ENCODE measurements at regions of chr15 and their contacts with region 1.

Region 1: GRCh38 chr15:40454904-40455391 is 14.2 kb downstream of the BAHD1 start:
- DNase-seq: peak; percentile 49
- ATAC-seq: peak; percentile 34
- H3K4me3 Mint-ChIP-seq: no peak overlapping the region
- H3K27ac Mint-ChIP-seq: peak overlapping the region; percentile 81
- H3K4me1 Mint-ChIP-seq: peaks cover 70% of the 10 kb centered on the region
- H3K27me3 Mint-ChIP-seq: no peaks in the 10 kb centered on the region
- CTCF ChIP-seq: no peak

Region 2: DNA sequence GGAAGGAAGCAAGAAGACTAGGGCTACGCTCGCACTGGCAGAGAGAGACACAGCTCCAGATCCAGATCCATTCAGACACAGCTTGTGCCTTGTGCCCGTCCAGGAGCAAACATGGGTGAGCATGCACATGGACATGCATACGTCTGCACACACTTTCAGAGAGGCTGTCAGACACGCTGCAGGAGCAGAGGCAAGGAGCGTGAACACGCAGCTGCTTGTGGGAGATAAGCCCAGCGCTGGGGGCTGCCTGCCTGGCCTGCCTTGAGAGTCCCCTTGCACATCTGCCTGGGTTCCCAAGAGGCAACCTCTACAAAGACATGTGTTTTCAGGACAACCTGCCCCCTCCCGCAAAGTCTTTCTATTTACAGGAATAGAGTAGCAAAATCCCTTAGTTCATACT is 27.8 kb before region 1 on chr15:
- CTCF ChIA-PET with region 1: no interaction called
- POLR2A ChIA-PET with region 1: no interaction called
- intact Hi-C with region 1: no loop called
- DNase-seq: no peak
- ATAC-seq: no peak
- H3K4me3 Mint-ChIP-seq: no peak overlapping the region
- H3K27ac Mint-ChIP-seq: no peak overlapping the region
- H3K4me1 Mint-ChIP-seq: no peaks in the 10 kb centered on the region
- H3K27me3 Mint-ChIP-seq: no peaks in the 10 kb centered on the region
- CTCF ChIP-seq: no peak

Region 3: DNA sequence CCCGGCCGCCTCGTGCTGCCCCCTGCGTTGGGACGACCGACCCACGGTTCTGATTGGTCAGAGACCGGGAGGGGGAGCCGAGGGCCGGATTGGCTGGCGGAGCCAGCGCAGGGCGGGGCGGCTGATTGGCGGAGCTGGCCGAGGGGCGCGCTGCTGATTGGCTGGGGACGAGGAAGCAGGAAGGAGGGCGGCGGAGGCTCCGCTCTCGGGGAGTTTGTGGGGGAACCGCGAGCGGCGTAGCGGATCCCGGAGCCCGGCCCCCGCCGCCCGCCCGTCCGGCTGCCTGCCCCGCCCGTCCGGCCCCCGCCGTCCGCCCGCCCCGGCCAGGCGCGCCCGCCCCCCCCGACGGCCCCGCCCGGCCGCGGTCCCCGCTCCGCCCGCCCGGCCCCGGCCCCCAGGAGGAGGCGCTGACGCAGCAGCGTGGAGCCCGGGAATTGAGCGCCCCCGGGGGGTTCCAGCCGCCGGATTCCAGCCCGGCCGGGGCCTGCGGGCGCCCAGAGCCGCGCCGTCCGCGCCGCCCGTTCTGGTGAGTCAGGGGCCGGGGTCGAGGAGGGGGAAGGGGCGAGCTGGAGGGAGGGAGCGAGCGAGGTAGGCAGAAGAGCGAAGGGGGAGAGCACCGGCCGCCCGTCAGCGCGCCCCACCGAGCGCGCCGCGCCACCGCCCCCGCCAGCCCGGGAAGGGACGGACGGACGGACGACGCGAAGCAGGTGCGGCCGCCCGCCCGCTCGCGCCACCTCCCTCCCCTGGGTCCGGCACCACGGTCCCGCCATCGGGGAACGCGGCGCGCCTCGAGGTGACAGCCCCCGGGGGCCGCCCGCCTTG is 14.0 kb before region 1 on chr15 and contains the start of gene BAHD1:
- CTCF ChIA-PET with region 1: interaction called, 23 read pairs
- POLR2A ChIA-PET with region 1: interaction called, 55 read pairs
- intact Hi-C with region 1: no loop called
- DNase-seq: peak; percentile 97
- ATAC-seq: peak; percentile 92
- H3K4me3 Mint-ChIP-seq: peak within 1 kb of the TSS; percentile 86
- H3K27ac Mint-ChIP-seq: peak within 1 kb of the TSS; percentile 77
- H3K4me1 Mint-ChIP-seq: peaks cover 51% of the 10 kb centered on the region
- H3K27me3 Mint-ChIP-seq: peaks cover 30% of the 10 kb centered on the region
- CTCF ChIP-seq: no peak
- total RNA-seq, gene BAHD1: 14.7 to 17.6 TPM

Region 4: DNA sequence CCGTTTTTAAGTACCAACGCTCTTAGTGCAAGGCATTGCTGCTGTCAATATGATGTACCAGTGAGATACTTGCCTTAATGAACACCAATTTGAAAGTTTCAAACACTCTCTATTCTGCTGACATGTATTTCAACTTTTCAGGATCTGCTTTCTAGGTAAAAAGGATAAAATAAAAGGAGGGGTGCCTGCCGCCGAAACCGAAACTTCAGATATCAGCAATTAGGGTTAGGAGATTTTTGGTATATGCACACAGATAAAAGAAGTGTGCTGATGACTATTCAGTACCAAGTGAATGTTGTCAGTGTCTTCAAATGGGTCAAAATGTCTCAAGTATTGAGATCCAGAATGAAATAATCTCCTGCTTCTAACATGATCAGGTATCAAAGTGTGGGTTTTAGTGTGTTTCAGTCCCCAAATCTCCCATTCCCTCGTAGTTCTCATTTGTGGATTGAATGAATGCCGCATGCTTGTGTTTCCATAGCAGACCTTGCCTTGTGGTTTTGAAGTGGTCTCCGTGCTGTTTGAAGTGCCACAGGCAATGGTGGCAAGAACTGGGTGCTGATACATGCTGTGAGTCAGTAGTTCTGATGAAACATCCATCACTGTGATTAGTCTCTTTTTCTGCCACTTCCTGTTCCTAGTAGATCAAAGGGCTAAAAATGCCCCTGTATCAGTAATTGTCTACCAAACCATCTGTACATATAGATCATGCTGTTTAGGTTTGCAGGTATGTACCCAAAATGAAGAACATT is 38.3 kb after region 1 on chr15:
- CTCF ChIA-PET with region 1: no interaction called
- POLR2A ChIA-PET with region 1: interaction called, 3 read pairs
- intact Hi-C with region 1: loop called (anchors 5 kb)
- DNase-seq: peak; percentile 84
- ATAC-seq: peak; percentile 97
- H3K4me3 Mint-ChIP-seq: peak overlapping the region; percentile 9
- H3K27ac Mint-ChIP-seq: peak overlapping the region; percentile 68
- H3K4me1 Mint-ChIP-seq: peaks cover 33% of the 10 kb centered on the region
- H3K27me3 Mint-ChIP-seq: peaks cover 2% of the 10 kb centered on the region
- CTCF ChIP-seq: no peak

Region 5: GRCh38 chr15:40506964-40507571 is 52.1 kb after region 1 on chr15:
- CTCF ChIA-PET with region 1: interaction called, 11 read pairs
- POLR2A ChIA-PET with region 1: interaction called, 3 read pairs
- intact Hi-C with region 1: no loop called
- DNase-seq: peak; percentile 71
- ATAC-seq: peak; percentile 85
- H3K4me3 Mint-ChIP-seq: peak overlapping the region; percentile 4
- H3K27ac Mint-ChIP-seq: no peak overlapping the region
- H3K4me1 Mint-ChIP-seq: peaks cover 19% of the 10 kb centered on the region
- H3K27me3 Mint-ChIP-seq: peaks cover 40% of the 10 kb centered on the region
- CTCF ChIP-seq: peak; percentile 79

Measured in activated CD8-positive, alpha-beta T cell treated with anti-CD3 and anti-CD28 coated beads for 36 hours (primary cell).